HCT116 (cell line): ENCODE measurements at regions of chr12 and their contacts with region 1.

Region 1: GRCh38 chr12:54759751-54760150 is 94.6 kb upstream of the MUCL1 start:
- DNase-seq: peak; percentile 42
- ATAC-seq: peak; percentile 93
- H3K4me3 ChIP-seq: no peak overlapping the region
- H3K27ac ChIP-seq: no peak overlapping the region
- H3K4me1 ChIP-seq: no peaks in the 10 kb centered on the region
- H3K27me3 ChIP-seq: peaks cover 36% of the 10 kb centered on the region
- CTCF ChIP-seq: peak; percentile 53 to 72 (median 64); a peak in 5 of 6 replicates
- POLR2A ChIP-seq: no peak
- RAD21 ChIP-seq: peak; percentile 87

Region 2: DNA sequence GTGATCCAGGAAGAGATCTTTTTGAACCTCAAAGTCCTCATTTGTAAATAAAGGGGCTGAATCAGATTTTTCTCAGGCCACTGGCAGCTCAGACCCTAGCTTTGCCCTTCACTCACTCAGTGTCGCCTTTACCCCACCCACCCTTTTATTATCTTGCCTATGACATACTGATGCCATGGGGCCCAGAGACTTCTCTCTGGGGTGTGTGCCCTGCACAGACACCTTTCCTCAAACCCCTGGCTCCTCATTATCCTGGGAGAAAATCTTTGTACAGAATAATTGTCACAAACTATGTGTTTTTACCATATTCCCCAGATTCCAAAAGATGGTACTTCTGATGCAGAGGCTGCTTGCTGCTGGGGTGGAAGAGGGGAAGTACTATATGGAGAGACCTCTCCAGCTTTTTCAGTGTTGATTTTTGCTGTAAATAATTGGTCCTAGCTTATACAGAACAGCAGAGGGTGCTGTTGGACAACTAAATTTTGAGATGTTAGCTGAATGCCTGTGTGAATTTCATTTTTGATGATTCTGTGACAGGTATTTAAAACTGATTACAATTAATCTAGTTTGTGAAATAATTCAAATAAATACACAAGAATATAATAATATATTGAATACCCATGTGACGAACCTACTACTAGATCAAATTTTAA is 57.7 kb before region 1 on chr12:
- CTCF ChIA-PET with region 1: interaction called, 21 read pairs
- POLR2A ChIA-PET with region 1: interaction called, 3 read pairs
- RAD21 ChIA-PET with region 1: interaction called, 3 read pairs
- intact Hi-C with region 1: no loop called
- DNase-seq: peak; percentile 37
- ATAC-seq: peak; percentile 78
- H3K4me3 ChIP-seq: no peak overlapping the region
- H3K27ac ChIP-seq: no peak overlapping the region
- H3K4me1 ChIP-seq: no peaks in the 10 kb centered on the region
- H3K27me3 ChIP-seq: peaks cover 36% of the 10 kb centered on the region
- CTCF ChIP-seq: peak; percentile 51 to 66 (median 61); a peak in 5 of 6 replicates
- POLR2A ChIP-seq: no peak
- RAD21 ChIP-seq: peak; percentile 71

Region 3: GRCh38 chr12:54749191-54749818 is 10.4 kb before region 1 on chr12:
- CTCF ChIA-PET with region 1: interaction called, 35 read pairs
- POLR2A ChIA-PET with region 1: no interaction called
- RAD21 ChIA-PET with region 1: no interaction called
- intact Hi-C with region 1: no loop called
- DNase-seq: peak; percentile 37
- ATAC-seq: peak; percentile 81
- H3K4me3 ChIP-seq: no peak overlapping the region
- H3K27ac ChIP-seq: no peak overlapping the region
- H3K4me1 ChIP-seq: no peaks in the 10 kb centered on the region
- H3K27me3 ChIP-seq: peaks cover 42% of the 10 kb centered on the region
- CTCF ChIP-seq: peak; percentile 76 to 87 (median 83)
- POLR2A ChIP-seq: no peak
- RAD21 ChIP-seq: peak; percentile 77

Region 4: GRCh38 chr12:54840317-54840771 is 80.6 kb after region 1 on chr12:
- CTCF ChIA-PET with region 1: no interaction called
- POLR2A ChIA-PET with region 1: no interaction called
- RAD21 ChIA-PET with region 1: no interaction called
- intact Hi-C with region 1: no loop called
- DNase-seq: no peak
- ATAC-seq: no peak
- H3K4me3 ChIP-seq: no peak overlapping the region
- H3K27ac ChIP-seq: no peak overlapping the region
- H3K4me1 ChIP-seq: no peaks in the 10 kb centered on the region
- H3K27me3 ChIP-seq: peaks cover 67% of the 10 kb centered on the region
- CTCF ChIP-seq: no peak
- POLR2A ChIP-seq: no peak
- RAD21 ChIP-seq: no peak

Region 5: DNA sequence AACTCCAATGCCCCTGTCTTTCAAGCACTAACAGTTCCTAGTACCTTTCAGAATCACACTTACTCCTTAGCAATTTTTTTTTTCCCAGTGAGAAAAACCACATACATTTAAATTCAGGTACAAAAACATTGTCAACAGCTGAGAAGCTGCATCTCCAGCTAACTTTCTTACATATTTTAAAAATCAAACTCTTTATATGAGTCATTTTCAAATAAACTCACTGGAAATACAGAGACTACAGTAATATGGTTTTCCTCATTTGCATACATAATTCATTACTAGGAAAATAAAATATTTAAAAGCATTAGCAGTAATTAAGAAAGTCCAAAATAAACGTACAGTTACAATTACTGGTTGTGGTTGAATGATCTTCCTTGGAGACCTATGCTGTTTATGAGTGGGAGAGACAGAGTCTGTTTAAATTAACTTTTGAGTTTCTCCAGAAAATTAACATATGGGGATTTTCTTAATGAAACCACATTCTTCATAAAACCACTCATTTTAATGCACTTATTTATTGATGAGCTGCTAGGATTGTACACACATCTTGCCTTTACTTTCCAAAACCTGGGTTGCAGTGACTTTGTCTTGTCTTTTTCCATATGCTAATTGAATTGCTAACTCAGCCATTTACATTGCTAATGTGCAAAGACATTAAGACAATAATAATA is 104.3 kb after region 1 on chr12:
- CTCF ChIA-PET with region 1: no interaction called
- POLR2A ChIA-PET with region 1: no interaction called
- RAD21 ChIA-PET with region 1: no interaction called
- intact Hi-C with region 1: no loop called
- DNase-seq: no peak
- ATAC-seq: no peak
- H3K4me3 ChIP-seq: no peak overlapping the region
- H3K27ac ChIP-seq: no peak overlapping the region
- H3K4me1 ChIP-seq: no peaks in the 10 kb centered on the region
- H3K27me3 ChIP-seq: peaks cover 70% of the 10 kb centered on the region
- CTCF ChIP-seq: no peak
- POLR2A ChIP-seq: no peak
- RAD21 ChIP-seq: no peak

Region 6: GRCh38 chr12:54958048-54958658 is 198.4 kb after region 1 on chr12:
- CTCF ChIA-PET with region 1: interaction called, 85 read pairs
- POLR2A ChIA-PET with region 1: no interaction called
- RAD21 ChIA-PET with region 1: interaction called, 5 read pairs
- intact Hi-C with region 1: loop called (anchors 1 kb)
- DNase-seq: peak; percentile 53
- ATAC-seq: peak; percentile 76
- H3K4me3 ChIP-seq: no peak overlapping the region
- H3K27ac ChIP-seq: no peak overlapping the region
- H3K4me1 ChIP-seq: no peaks in the 10 kb centered on the region
- H3K27me3 ChIP-seq: peaks cover 85% of the 10 kb centered on the region
- CTCF ChIP-seq: peak; percentile 53 to 82 (median 76)
- POLR2A ChIP-seq: no peak
- RAD21 ChIP-seq: peak; percentile 93

Region 7: DNA sequence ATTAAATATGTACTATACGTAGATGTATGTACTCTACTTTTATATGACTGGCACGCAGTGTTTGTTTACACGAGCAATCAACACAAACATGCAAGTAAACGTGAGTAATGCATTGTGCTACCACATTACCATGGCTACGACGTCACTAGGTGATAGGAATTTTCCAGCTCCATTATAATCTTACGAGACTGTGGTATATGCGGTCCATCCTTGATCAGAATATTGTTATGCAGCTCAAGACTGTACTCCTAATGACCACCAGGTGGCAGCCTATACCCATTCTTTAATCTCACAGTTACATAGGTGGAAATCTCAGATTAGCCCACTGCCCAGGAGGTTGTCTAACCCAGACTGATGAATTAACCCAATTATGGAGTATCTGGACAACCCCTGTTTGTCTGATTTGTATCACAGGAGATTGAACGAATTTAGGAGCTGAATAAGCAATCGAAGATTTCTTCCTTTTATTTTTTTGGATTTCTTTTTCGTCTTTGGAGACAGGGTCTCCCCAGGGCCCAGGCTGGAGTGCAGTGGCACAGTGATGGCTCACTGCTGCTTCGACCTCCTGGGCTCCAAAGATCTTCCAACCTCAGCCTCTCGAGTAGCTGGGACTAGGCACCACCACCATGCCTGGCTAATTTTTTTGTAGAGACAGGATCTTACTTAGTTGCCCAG is 233.5 kb after region 1 on chr12:
- CTCF ChIA-PET with region 1: interaction called, 15 read pairs
- POLR2A ChIA-PET with region 1: no interaction called
- RAD21 ChIA-PET with region 1: no interaction called
- intact Hi-C with region 1: no loop called
- DNase-seq: peak; percentile 74
- ATAC-seq: peak; percentile 97
- H3K4me3 ChIP-seq: no peak overlapping the region
- H3K27ac ChIP-seq: no peak overlapping the region
- H3K4me1 ChIP-seq: peaks cover 0 to 2% of the 10 kb centered on the region in 2 experiments; a peak in 1 of 4 replicates
- H3K27me3 ChIP-seq: peaks cover 65% of the 10 kb centered on the region
- CTCF ChIP-seq: peak; percentile 75 to 90 (median 88)
- POLR2A ChIP-seq: no peak
- RAD21 ChIP-seq: peak; percentile 85